ENCODE measurements at regions of chr1 and their contacts with region 1.

Region 1: DNA sequence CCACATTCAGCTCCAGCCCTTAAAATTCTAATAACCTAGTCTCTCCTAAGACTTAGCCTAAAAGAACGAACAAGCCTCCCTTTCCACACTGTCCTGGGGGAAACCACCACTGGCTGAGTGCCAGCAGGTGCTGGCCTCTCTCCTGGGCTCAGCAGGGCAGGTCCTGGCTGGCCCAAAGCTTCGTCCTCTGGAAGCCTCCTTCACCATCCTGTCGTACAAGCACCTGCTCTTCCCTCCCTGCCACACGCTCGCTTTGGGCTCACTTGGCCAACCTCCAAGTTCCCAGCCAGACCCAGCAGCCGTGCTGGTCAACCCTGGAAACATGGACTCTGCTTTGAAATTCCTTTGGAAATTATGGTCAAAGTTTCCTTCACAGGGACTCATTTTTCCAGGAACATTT is 58.2 kb upstream of the SLC25A33 start:
- DNase-seq: no peak
- H3K4me3 ChIP-seq: no peak overlapping the region
- CTCF ChIP-seq: no peak

Region 2: DNA sequence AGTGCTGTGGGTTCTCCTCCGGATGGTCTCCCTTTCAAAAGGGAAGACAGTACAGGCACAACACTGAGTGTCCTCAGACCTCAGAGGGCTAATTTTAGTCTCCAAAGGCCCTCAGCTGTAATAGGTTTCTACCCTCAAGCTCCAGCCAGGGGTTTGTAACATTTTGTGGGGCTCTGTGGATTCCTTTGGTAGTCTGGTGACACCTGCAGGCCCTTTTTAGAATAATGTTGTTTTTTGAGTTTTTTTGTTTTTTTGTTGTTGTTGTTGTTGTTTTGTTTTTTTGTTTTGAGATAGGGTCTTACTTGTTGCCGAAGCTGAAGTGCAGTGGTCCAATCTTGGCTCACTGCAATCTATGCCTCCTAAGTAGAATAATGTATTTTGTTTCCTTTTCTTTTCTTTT is 92.7 kb after region 1 on chr1:
- in situ Hi-C with region 1: loop called (anchors 5 kb)
- DNase-seq: no peak
- H3K4me3 ChIP-seq: no peak overlapping the region
- CTCF ChIP-seq: peak; percentile 39

Measured in astrocyte of the cerebellum (primary cell).